GM12878 (cell line): ENCODE measurements at regions of chr2 and their contacts with region 1.

Region 1: GRCh38 chr2:20578895-20579825 is 71.7 kb downstream of the HS1BP3 start:
- DNase-seq: peak; percentile 74
- ATAC-seq: peak; percentile 86
- H3K4me3 ChIP-seq: peak overlapping the region; percentile 49; the same call in 1 of the 2 replicates
- H3K27ac ChIP-seq: peak overlapping the region; percentile 86
- H3K4me1 ChIP-seq: peaks cover 46% of the 10 kb centered on the region
- H3K27me3 ChIP-seq: no peaks in the 10 kb centered on the region
- CTCF ChIP-seq: no peak
- EP300 ChIP-seq: 0 out of 4 replicates have a peak, but pooled peaks of 1 of the 2 experiments have one; percentile 46
- POLR2A ChIP-seq: no peak
- RAD21 ChIP-seq: 0 out of 2 replicates have a peak, but pooled peaks have one; percentile 2

Region 2: DNA sequence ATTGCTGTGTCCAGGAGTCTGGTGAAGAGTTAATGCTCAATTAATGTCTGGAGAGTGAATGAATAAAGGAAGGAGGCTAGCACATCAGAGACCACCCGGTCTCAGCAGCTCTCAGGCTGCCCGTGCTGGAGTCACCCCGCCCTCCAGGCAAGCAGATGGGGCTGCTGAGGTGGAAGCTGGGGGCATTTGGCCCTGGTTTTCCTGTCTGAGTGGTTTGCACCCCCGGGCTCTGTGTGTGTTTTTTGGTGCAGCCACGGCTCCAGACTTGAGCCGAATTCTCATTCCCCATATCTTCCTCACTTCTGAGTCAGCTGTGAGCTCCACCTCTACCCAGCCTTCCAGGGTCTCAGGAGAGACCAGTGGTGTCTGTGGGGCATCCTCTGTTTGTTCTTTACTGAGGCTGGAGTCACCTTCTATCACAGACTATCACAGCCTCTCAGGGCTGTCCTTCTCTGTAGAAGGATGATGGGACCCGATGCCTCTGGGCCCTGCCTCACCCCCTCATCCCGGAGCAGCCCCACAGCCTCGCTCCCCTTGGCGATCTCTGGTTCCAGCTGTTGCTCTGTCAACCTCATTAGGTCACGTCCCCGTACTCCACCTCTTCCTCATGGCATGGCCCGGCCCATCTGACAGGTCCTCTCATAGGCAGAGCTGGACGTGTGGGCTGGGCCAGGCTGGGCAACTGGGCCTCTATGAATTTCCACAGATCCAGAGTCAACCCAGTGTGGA is 11.0 kb after region 1 on chr2:
- CTCF ChIA-PET with region 1: interaction called, 26 read pairs
- POLR2A ChIA-PET with region 1: interaction called, 22 read pairs
- RAD21 ChIA-PET with region 1: interaction called, 17 read pairs
- SMC1A ChIA-PET with region 1: interaction called, 26 read pairs
- in situ Hi-C with region 1: no loop called
- intact Hi-C with region 1: loop called (anchors 1 kb)
- DNase-seq: no peak
- ATAC-seq: no peak
- H3K4me3 ChIP-seq: no peak overlapping the region
- H3K27ac ChIP-seq: no peak overlapping the region
- H3K4me1 ChIP-seq: peaks cover 17% of the 10 kb centered on the region
- H3K27me3 ChIP-seq: no peaks in the 10 kb centered on the region; a peak in 1 of 4 replicates
- CTCF ChIP-seq: no peak
- EP300 ChIP-seq: no peak
- POLR2A ChIP-seq: no peak
- RAD21 ChIP-seq: no peak

Region 3: DNA sequence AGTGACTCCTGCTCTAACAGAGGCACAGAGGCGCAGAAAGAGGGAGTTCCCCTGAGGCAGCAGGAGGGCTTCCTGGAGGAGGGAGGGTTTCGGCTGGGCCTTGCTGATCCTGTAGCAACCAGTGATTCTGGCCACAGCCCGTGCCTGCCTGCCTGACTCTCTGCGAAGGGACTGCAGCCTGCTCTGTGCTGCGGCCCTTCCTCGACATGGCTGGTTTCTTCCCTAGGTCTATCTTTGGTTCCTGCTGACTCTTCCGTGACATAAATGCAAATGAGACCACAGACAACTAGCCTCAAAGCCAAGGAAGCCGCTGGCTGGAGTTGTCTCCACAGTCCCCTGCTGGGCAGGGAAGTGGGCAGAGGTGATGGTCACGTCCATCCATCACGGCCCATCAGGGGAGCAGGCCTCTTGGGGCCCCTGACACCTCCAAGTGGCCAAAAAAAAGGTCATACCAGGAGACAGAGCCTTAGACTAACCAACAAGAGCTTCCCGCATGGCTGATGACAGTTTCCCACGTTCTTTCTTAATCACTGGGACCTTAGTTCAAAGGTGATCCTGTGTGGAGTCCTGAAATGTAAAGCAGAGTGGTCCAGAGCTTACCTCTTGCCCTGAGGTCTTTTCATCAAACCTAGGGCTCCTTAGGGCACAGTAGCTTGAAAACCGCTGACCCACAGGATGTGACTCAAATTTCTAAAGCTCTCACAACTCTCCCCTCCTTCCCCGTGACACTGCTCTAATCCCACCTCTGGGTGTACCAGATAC is 16.5 kb after region 1 on chr2:
- CTCF ChIA-PET with region 1: interaction called, 26 read pairs
- POLR2A ChIA-PET with region 1: interaction called, 22 read pairs
- RAD21 ChIA-PET with region 1: interaction called, 17 read pairs
- SMC1A ChIA-PET with region 1: interaction called, 26 read pairs
- in situ Hi-C with region 1: no loop called
- intact Hi-C with region 1: loop called (anchors 1 kb)
- DNase-seq: peak; percentile 85
- ATAC-seq: peak; percentile 92
- H3K4me3 ChIP-seq: peak overlapping the region; percentile 25; the same call in 1 of the 2 replicates
- H3K27ac ChIP-seq: peak overlapping the region; percentile 79
- H3K4me1 ChIP-seq: peaks cover 38% of the 10 kb centered on the region
- H3K27me3 ChIP-seq: no peaks in the 10 kb centered on the region
- CTCF ChIP-seq: no peak
- EP300 ChIP-seq: peak; percentile 13 to 50; a peak in 3 of 4 replicates
- POLR2A ChIP-seq: peak; percentile 81
- RAD21 ChIP-seq: 0 out of 2 replicates have a peak, but pooled peaks have one; percentile 5

Region 4: DNA sequence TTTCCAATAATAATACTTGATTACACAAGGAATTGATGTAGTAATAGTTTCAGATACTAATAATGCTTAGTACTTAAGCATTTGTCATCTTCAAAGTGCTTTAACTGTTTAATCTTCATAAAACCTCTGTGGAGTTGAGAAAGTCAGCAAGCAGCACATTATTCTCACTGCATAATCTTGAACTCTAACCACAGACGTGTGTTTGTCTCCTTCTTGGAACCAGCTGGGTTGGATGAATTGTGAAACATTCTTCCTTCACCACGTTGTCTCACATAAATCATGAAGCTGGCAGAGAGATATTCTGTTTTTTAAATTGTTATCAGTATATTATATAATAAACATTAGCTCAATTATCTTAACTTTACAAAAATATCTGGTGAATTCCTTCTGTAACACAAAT is 298.8 kb after region 1 on chr2:
- CTCF ChIA-PET with region 1: no interaction called
- POLR2A ChIA-PET with region 1: no interaction called
- RAD21 ChIA-PET with region 1: no interaction called
- SMC1A ChIA-PET with region 1: no interaction called
- in situ Hi-C with region 1: no loop called
- intact Hi-C with region 1: no loop called
- DNase-seq: no peak
- ATAC-seq: no peak
- H3K4me3 ChIP-seq: no peak overlapping the region
- H3K27ac ChIP-seq: no peak overlapping the region
- H3K4me1 ChIP-seq: no peaks in the 10 kb centered on the region
- H3K27me3 ChIP-seq: no peaks in the 10 kb centered on the region
- CTCF ChIP-seq: no peak
- EP300 ChIP-seq: no peak
- POLR2A ChIP-seq: no peak
- RAD21 ChIP-seq: no peak